Left ventricle myocardium superior (tissue), 1 donor: ENCODE measurements at regions of chr19 and their contacts with region 1.

Region 1: DNA sequence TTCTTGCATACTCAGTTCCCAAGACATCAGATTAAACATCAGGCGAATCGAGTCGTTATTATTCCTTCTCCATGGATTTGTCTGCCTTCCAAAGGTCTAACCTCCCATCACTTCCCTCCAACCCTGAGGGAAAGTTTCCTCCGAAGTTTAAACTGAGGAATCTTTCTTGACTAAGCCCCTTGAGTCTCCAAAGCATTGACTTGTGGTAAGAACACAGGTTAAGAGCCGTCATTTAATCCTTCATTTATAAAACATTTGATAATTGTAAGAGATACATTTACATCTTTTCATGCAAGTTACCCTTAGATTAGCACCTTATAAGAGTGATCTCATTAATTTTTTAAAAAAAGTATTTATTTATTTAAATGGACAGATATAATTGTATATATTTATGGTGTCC is at the start of gene OR7A10:
- DNase-seq: no peak
- ATAC-seq: no peak
- total RNA-seq, gene OR7A10: not detected

Region 2: GRCh38 chr19:14795078-14795721 is 53.6 kb before region 1 on chr19:
- intact Hi-C with region 1: no loop called
- DNase-seq: no peak
- ATAC-seq: no peak

Region 3: DNA sequence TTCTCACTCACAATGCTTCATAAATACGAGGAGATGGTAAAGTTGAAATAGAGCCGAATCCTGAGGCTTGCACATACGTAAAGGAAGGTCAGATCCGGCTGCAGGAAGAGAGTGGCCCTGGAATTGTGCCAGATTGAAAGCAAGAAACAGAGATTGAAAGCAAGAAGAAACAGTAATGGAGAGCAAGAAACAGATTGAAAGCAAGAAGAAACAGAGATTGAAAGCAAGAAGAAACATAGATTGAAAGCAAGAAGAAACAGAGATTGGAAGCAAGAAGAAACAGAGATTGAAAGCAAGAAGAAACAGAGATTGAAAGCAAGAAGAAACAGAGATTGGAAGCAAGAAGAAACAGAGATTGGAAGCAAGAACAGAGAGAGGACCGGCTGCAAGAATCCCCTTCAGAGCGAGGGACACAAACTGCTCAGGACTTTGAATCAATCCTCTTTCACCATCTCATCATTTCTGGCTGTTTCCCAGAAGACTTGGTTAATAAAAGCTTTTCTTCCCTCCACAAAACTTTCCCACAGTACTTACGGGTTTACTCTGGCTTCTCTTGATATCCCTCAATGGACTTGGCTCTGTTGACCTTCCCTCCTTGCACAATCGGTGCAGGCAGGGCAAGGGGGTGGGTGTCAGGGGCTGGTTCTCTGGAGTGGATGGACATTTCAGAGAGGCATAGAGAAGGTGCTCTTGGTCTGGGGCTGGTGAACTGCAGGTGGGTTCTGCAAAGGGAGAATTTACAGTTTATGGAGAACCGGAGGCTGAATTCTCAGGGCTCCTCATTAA is 39.4 kb before region 1 on chr19:
- intact Hi-C with region 1: loop called (anchors 2 kb)
- DNase-seq: no peak
- ATAC-seq: peak; percentile 48

Region 4: DNA sequence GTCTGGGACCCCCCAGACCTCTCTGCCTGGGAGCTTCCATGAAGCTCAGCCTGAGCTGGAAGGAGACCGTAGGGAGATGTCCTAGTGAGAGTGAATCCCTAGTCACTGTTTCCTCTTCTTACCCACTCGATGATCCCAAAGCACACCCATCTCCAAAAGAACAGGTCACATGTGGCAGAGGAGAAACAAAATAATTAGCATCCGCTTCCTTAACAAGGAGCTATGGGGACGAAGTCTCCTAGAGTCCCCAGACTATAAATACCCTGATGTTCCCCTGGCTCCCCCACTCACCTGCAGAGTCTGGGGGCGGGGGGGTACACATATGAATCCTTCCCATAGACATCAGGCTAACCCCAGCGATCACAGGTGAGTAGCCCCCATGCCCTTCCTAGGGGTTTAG is 233.1 kb after region 1 on chr19 and contains the start of gene OR1I1:
- intact Hi-C with region 1: no loop called
- DNase-seq: no peak
- ATAC-seq: no peak
- total RNA-seq, gene OR1I1: not detected

Region 5: GRCh38 chr19:15199921-15200887 is 351.4 kb after region 1 on chr19:
- intact Hi-C with region 1: no loop called
- DNase-seq: no peak
- ATAC-seq: no peak

Region 6: DNA sequence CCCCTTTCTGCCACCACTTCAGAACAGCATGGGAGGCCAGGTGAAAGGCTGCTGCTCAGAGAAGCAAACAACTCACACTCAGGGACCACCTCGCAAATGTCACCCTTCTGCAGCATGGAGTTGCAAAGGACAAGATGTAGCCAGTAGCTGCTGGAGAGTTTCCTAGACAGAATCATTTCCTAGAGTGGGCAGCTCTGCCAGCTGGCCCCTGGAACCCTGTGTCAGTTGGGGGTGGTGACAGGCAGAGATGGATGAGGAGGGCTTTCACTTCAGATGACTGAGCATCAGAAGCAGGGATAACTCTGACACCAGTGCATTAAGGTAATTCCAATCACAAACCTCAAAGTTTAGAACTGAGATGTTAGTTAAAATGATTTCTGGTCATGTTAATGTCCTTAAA is 417.9 kb after region 1 on chr19:
- intact Hi-C with region 1: no loop called
- DNase-seq: no peak
- ATAC-seq: peak; percentile 36